Aorta (tissue), 5 donors: ENCODE measurements at regions of chr3 and their contacts with region 1.

Region 1: DNA sequence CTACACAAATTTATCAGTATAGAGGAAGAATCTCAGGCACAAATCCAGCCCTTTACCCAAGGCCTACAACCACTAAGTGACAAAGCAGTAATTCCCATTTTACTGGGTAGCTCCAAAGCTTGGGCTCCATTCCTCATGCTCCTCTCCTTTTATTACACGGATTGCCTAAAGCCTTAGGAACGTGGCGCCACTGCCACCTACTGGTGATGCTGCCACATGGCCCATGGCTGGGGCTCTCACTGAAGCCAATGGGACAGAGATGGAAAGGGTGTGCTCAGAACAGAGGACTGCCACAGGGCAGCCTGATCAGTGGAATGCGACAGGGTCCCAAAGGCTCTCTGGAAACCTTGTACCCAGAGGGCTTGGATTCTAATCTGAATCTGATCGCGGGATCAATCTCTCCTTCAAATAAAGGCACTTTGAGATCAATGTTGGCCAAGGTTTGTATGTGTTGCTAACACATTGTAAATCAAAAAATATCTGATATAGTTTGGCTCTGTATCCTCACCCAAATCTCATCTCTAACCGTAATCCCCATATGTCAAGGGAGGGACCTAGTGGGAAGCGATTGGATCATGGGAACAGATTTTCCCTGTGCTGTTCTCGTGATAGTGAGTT is 33.5 kb upstream of the LYZL4 start:
- DNase-seq: peak; percentile 87 to 94
- ATAC-seq: peak; percentile 92
- H3K4me3 ChIP-seq: no peak overlapping the region
- H3K27ac ChIP-seq: no peak overlapping the region
- H3K4me1 ChIP-seq: no peaks in the 10 kb centered on the region
- H3K27me3 ChIP-seq: no peaks in the 10 kb centered on the region

Region 2: GRCh38 chr3:41893977-41894376 is 550.0 kb before region 1 on chr3:
- intact Hi-C with region 1: loop called (anchors 5 to 10 kb)
- DNase-seq: no peak
- ATAC-seq: no peak
- H3K4me3 ChIP-seq: no peak overlapping the region
- H3K27ac ChIP-seq: no peak overlapping the region
- H3K4me1 ChIP-seq: no peaks in the 10 kb centered on the region
- H3K27me3 ChIP-seq: no peaks in the 10 kb centered on the region

Region 3: DNA sequence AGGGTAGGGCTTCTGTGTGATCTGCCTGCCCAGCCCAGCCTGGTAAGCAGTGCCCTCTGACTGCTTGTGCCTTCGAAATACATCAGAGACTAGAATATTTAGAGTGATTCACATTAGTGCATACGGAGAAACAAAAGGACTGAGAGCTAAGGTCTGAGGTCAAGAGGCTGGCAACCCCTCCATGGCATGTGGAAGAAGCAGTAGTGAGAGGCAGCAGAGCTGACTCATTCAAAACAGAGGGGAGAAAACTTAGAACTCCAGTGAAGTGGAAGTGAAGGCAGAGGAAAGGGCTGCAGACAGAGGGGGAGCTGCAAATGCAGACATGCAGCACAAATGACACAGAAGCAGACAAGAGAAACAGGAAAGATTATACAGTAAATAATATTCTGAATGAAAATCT is 543.7 kb before region 1 on chr3:
- intact Hi-C with region 1: loop called (anchors 5 to 10 kb)
- DNase-seq: no peak
- ATAC-seq: no peak
- H3K4me3 ChIP-seq: no peak overlapping the region
- H3K27ac ChIP-seq: no peak overlapping the region
- H3K4me1 ChIP-seq: no peaks in the 10 kb centered on the region
- H3K27me3 ChIP-seq: no peaks in the 10 kb centered on the region

Region 4: GRCh38 chr3:42229942-42230688 is 213.8 kb before region 1 on chr3:
- intact Hi-C with region 1: loop called (anchors 1 to 2 kb)
- DNase-seq: no peak
- ATAC-seq: peak; percentile 56
- H3K4me3 ChIP-seq: peak overlapping the region in 1 of 2 donors; percentile 10
- H3K27ac ChIP-seq: no peak overlapping the region
- H3K4me1 ChIP-seq: no peaks in the 10 kb centered on the region
- H3K27me3 ChIP-seq: peaks cover 0 to 2% of the 10 kb centered on the region in 2 donors

Region 5: DNA sequence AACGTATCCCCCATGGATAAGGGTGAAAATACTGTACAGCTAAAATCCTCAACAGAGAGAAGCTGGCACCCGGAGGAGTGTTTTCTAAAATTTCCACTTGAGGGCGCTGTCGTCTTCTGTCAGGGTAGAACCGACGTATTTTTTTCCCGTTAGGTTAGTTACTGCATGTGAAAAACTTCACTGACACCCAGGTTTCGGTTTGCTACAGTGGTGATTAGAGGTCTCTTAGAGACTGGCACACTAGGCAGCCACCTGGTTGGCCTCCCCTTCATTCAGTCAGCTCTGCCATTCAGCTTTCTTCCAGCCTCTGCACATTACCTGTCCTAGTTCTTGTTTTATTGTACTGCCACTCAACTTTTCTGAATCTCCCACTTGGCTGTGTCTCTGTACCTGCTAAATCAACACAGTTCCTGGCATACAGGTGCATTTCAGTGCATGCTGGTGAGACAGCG is 196.3 kb before region 1 on chr3:
- intact Hi-C with region 1: loop called (anchors 5 kb)
- DNase-seq: no peak
- ATAC-seq: no peak
- H3K4me3 ChIP-seq: no peak overlapping the region
- H3K27ac ChIP-seq: no peak overlapping the region
- H3K4me1 ChIP-seq: no peaks in the 10 kb centered on the region
- H3K27me3 ChIP-seq: no peaks in the 10 kb centered on the region

Region 6: DNA sequence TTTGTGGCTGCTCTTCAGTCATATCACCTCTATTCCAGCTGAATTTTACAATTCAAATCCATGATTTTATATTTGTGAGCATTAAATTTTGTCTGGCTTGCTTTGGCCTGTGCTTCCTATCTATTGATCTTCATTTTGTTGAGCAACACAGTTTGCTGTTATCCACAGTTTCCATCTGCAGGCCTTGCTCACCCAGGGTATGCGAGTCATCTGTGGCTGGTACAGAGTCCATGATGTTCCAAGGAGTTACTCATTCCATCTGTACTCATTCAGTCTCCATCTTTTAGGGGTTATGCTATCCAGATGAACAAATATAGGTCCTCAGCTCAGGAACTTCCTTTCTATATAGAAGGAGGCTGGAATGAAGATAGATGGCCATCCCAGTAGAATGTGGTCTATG is 107.8 kb before region 1 on chr3:
- intact Hi-C with region 1: no loop called
- DNase-seq: no peak
- ATAC-seq: no peak
- H3K4me3 ChIP-seq: no peak overlapping the region
- H3K27ac ChIP-seq: no peak overlapping the region
- H3K4me1 ChIP-seq: no peaks in the 10 kb centered on the region
- H3K27me3 ChIP-seq: peaks cover 0 to 3% of the 10 kb centered on the region in 2 donors

Region 7: GRCh38 chr3:42547401-42547945 is 103.5 kb after region 1 on chr3:
- intact Hi-C with region 1: loop called in 1 of 2 experiments (anchors 5 kb)
- DNase-seq: peak; percentile 73 to 91
- ATAC-seq: peak; percentile 71
- H3K4me3 ChIP-seq: no peak overlapping the region
- H3K27ac ChIP-seq: no peak overlapping the region
- H3K4me1 ChIP-seq: peaks cover 0 to 3% of the 10 kb centered on the region in 2 donors
- H3K27me3 ChIP-seq: no peaks in the 10 kb centered on the region